Prostate gland (tissue), 2 donors: ENCODE measurements at regions of chr4 and their contacts with region 1.

Region 1: GRCh38 chr4:71713611-71714203 is 70.2 kb downstream of the GC start:
- DNase-seq: peak; percentile 12
- H3K4me3 ChIP-seq: no peak overlapping the region
- H3K27ac ChIP-seq: no peak overlapping the region
- H3K4me1 ChIP-seq: no peaks in the 10 kb centered on the region
- H3K27me3 ChIP-seq: no peaks in the 10 kb centered on the region
- CTCF ChIP-seq: peak; percentile 20 to 76 (median 68)
- POLR2A ChIP-seq: no peak

Region 2: DNA sequence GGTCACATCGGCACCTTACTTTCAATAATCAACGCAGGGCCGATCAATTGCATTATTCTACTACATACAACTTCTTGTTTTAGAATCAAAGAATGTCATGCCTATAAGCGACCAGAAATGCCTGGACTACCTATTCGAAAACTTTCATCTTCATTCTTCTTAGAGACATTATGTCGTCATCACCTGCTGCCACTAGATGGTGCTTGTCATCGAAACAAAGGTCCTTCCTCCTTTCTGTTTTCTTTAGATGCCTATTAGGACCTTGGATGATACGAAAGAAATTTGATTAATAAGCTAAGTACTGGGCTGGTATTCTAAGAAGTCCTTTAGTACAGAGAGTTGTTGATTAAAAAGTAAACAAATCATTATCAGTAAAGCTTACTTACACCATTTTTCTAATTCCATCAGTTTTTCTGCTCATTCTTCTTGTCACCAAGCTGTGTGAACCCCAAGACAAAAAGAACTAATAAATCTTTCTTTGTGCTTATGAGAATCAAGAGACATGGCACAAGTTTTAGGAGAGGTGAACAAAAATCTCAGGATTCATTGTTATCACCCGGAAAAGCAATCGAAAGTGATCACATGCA is 529.4 kb before region 1 on chr4:
- intact Hi-C with region 1: loop called (anchors 5 kb)
- DNase-seq: peak; percentile 60
- H3K4me3 ChIP-seq: no peak overlapping the region
- H3K27ac ChIP-seq: no peak overlapping the region
- H3K4me1 ChIP-seq: no peaks in the 10 kb centered on the region
- H3K27me3 ChIP-seq: no peaks in the 10 kb centered on the region
- CTCF ChIP-seq: peak; percentile 39 to 75 (median 71)
- POLR2A ChIP-seq: no peak

Region 3: DNA sequence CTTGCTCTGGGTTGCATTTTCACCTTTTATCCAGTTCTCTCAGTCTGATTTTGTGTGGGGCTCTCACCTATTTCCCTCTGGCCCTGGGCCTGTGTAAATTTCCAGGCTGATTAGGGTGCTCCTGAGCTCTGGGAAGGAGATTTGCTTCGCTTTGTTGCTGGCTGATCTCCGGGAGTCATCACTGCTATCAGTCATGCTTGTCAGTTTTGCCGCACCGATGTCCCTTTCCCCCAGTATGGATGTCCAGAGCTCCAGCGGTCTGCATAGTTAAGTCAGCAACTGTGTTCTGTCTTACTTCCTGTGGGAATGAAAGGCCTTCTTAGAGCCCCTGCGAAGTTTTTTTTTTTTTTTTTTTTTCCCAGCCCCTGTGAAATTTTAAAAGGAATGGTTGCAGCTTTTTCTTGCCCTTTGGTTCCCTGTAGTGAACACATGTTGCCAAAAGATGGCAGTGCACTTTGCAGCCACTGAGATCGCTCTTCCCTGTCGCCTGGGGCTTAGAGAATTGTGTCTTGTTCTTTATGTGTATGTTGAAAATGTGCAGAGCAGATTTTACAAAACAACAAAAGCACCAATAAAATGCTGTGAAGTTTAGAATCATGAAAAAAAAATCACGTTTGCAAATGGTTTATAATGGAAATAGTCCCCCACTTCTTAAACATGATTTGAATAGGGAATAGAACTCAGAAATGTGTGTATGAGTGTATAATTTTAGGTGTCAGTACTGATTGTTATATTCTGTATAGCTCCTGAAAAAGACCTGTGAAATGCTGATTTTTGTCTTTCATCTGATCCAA is 484.0 kb before region 1 on chr4:
- intact Hi-C with region 1: loop called (anchors 5 kb)
- DNase-seq: peak; percentile 33
- H3K4me3 ChIP-seq: no peak overlapping the region
- H3K27ac ChIP-seq: peak overlapping the region in 1 of 2 donors; percentile 4
- H3K4me1 ChIP-seq: no peaks in the 10 kb centered on the region
- H3K27me3 ChIP-seq: no peaks in the 10 kb centered on the region
- CTCF ChIP-seq: peak; percentile 14 to 59 (median 49)
- POLR2A ChIP-seq: no peak

Region 4: DNA sequence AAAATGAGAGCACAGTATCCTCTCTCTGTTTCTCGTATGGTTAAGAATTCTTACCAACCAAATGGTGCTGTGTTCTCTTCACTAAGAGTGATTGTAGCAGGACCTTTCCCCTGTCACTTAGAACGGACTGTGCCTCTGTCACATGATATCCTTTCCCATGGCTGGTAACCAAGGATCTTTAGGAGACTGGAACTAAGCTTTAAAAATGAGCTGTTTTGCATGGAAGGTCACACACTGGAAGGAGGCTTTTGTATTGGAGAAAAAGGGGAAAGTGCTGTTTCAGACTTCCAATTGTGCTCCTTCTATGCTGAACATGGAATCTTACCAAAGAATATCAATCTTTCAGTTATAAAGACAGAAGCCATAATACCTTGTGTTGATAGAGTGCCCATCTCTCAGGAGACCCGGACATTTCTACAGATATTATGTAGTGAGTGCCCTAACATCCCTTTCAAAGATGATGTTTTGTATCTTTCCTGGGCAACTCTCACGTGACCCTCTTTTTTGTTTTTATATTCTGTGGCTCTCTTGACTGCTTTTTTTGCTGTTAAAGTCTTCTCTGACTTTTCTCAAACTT is 226.3 kb before region 1 on chr4:
- intact Hi-C with region 1: no loop called
- DNase-seq: peak; percentile 10
- H3K4me3 ChIP-seq: no peak overlapping the region
- H3K27ac ChIP-seq: no peak overlapping the region
- H3K4me1 ChIP-seq: no peaks in the 10 kb centered on the region
- H3K27me3 ChIP-seq: no peaks in the 10 kb centered on the region
- CTCF ChIP-seq: no peak
- POLR2A ChIP-seq: no peak